ENCODE measurements at regions of chr5 and their contacts with region 1.

Region 1: GRCh38 chr5:159773062-159773924 is 143.0 kb upstream of the ADRA1B start:
- DNase-seq: peak; percentile 37 to 95 (median 70)

Region 2: GRCh38 chr5:159444441-159445082 is 328.7 kb before region 1 on chr5:
- intact Hi-C with region 1: loop called (anchors 10 kb)
- DNase-seq: no peak

Region 3: GRCh38 chr5:160508780-160509361 is 735.6 kb after region 1 on chr5:
- intact Hi-C with region 1: no loop called
- DNase-seq: peak in 8 of 10 donors; percentile 13 to 92 (median 57)

Measured in posterior cingulate gyrus (tissue), 11 donors.